Common myeloid progenitor, CD34-positive (primary cell): ENCODE measurements at regions of chr5 and their contacts with region 1.

Region 1: DNA sequence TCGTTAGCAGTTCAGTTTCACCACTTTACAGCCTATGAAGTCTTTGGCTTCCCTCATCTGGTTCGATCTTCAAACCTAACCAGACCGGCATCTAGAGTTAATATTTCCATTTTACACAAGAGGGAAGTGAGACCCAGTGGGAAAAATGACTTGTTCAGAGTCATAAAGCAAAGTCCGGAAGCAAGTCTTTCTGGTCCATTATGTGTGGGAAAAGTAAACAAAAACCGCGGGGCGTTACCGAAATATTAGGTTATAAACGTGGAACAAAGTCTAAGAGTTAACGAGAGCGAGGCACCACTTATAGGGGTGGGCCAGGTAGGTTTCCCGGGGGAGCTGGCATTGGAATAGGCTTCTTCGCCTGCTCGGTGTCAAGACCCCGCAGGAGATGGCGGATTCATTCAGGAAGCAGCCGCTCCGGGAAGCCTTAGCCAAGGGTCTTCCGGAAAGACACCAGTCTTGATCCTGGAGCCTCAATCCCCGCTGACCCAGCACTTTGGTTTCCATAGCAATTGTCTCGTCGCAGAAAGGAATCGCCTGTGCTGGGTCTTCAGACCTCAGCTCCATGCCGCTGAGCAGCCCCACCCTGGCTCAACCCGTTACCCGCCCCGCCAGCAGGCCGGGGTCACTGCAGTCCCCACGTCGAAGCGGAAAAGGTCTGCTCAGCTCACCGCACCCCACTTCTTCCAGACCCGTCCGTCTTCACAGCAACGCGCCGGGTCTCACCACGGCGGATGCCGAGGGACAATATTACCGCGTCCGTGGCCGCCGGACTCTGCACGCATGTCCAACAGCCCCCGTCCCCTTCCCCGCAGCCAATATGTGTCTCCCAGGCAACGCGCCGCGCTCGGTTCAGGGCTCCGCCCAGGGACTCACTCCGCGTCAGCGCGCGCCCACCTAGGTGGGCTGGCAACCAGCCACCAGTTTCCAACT is at the start of gene C5orf52:
- DNase-seq: peak in 2 of 3 donors; percentile 29 to 45
- H3K4me3 ChIP-seq: peak within 1 kb of the TSS; percentile 13 to 80 (median 63)
- H3K27ac ChIP-seq: no peak within 1 kb of the TSS
- H3K4me1 ChIP-seq: peaks cover 4 to 15% (median 13%) of the 10 kb centered on the region in 4 experiments
- H3K27me3 ChIP-seq: peaks cover 0 to 41% (median 18%) of the 10 kb centered on the region in 5 experiments

Region 2: GRCh38 chr5:157718519-157718918 is 47.6 kb after region 1 on chr5:
- CTCF ChIA-PET with region 1: interaction called, 27 read pairs
- POLR2A ChIA-PET with region 1: no interaction called
- DNase-seq: peak; percentile 46 to 64 (median 61)
- H3K4me3 ChIP-seq: no peak overlapping the region
- H3K27ac ChIP-seq: no peak overlapping the region
- H3K4me1 ChIP-seq: peaks cover 0 to 9% (median 8%) of the 10 kb centered on the region in 4 experiments
- H3K27me3 ChIP-seq: no peaks in the 10 kb centered on the region